Upper lobe of right lung (tissue), 1 donor: ENCODE measurements at regions of chr11 and their contacts with region 1.

Region 1: GRCh38 chr11:77091146-77091940 is 11.3 kb upstream of the OMP start:
- DNase-seq: peak; percentile 90
- ATAC-seq: peak; percentile 89
- H3K4me3 ChIP-seq: no peak overlapping the region
- H3K27ac ChIP-seq: no peak overlapping the region
- H3K4me1 ChIP-seq: no peaks in the 10 kb centered on the region
- H3K27me3 ChIP-seq: no peaks in the 10 kb centered on the region
- CTCF ChIP-seq: peak; percentile 93

Region 2: DNA sequence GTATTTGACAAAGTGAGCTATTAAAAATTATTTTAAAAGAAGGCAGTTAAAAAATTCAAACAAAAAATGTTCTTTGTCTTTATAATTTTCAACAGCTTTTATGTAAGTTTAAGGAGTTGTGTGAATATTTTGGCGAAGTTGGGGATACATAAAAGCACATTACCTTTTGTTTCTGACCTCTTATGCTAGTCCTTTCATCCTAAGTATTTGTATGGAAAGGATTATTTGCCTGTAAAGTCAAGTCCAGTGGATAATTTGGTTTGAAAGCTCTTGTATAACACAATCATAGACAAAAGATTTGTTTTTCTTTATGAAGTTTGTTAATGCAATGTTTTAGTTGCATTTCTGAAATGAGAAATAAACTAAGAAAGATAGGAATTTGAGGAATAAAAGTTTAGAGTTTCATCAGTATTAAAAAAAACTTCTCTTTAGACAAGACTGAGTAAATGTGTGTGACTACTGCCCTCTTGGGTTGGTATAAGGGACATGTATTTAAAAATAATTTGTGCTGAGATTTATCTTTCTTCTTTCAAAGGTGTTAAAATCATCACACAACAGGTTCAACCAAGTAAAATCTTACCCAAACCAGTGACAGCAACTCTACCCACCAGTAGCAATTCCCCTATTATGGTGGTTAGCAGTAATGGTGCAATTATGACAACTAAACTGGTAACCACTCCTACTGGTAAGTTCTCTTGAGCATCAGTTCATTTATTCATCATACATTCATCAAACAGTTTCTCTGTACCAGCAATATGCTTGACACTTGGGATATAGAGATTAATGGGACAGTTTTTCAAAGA is 578.3 kb before region 1 on chr11:
- intact Hi-C with region 1: no loop called
- DNase-seq: no peak
- ATAC-seq: no peak
- H3K4me3 ChIP-seq: no peak overlapping the region
- H3K27ac ChIP-seq: no peak overlapping the region
- H3K4me1 ChIP-seq: no peaks in the 10 kb centered on the region
- H3K27me3 ChIP-seq: no peaks in the 10 kb centered on the region
- CTCF ChIP-seq: peak; percentile 39

Region 3: GRCh38 chr11:76910620-76911414 is 180.5 kb before region 1 on chr11:
- intact Hi-C with region 1: no loop called
- DNase-seq: no peak
- ATAC-seq: peak; percentile 45
- H3K4me3 ChIP-seq: peak overlapping the region; percentile 11
- H3K27ac ChIP-seq: peak overlapping the region; percentile 38
- H3K4me1 ChIP-seq: peaks cover 3% of the 10 kb centered on the region
- H3K27me3 ChIP-seq: no peaks in the 10 kb centered on the region
- CTCF ChIP-seq: no peak

Region 4: GRCh38 chr11:77047007-77047927 is 44.1 kb before region 1 on chr11:
- intact Hi-C with region 1: loop called (anchors 5 kb)
- DNase-seq: no peak
- ATAC-seq: peak; percentile 89
- H3K4me3 ChIP-seq: peak overlapping the region; percentile 56
- H3K27ac ChIP-seq: no peak overlapping the region
- H3K4me1 ChIP-seq: no peaks in the 10 kb centered on the region
- H3K27me3 ChIP-seq: peaks cover 17% of the 10 kb centered on the region
- CTCF ChIP-seq: peak; percentile 74

Region 5: DNA sequence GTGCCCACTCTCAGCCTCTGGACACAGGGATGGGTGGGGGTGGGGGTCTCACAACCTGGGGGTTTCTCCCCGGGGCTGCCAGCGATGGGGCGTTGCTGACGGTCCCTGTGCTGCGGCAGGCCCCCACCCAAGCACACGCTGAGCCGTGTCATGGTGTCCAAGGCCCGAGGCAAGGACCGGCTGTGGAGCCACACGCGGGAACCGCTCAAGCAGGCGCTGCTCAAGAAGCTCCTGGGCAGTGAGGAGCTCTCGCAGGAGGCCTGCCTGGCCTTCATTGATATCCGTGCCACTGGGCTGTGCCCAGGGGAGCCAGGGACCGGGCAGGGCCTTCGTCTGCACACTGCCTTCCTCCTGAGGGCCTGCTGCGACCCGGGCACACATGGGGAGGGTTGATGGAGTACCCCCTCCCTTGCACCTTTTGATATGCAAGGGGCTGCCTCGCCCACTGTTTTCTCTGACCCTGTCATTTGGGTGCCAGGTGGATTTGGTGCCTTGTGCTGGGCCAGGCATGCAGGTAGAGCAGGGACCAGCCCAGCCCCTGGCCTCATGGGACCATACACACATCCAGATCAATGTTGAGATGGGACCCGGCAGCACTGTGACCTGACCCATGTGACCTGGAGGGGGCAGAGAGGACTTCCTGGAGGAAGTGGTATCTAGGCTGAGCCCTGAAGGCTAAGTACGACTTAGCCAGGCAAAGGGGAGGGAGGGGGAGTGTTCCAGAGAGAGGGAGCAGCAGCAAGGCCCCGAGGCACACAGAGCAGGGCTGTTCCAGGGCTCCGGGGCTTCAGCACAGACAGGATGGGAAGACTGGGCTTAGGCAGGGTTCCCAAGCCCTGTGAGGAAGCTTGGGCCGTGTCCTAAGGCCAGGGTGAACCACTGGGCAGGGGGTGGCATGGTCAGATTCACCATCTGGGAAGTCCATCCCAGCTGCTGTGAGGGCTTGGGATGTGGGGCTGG is 111.9 kb after region 1 on chr11:
- intact Hi-C with region 1: no loop called
- DNase-seq: peak; percentile 57
- ATAC-seq: no peak
- H3K4me3 ChIP-seq: no peak overlapping the region
- H3K27ac ChIP-seq: no peak overlapping the region
- H3K4me1 ChIP-seq: no peaks in the 10 kb centered on the region
- H3K27me3 ChIP-seq: no peaks in the 10 kb centered on the region
- CTCF ChIP-seq: no peak